ENCODE measurements at regions of chr16 and their contacts with region 1.

Region 1: DNA sequence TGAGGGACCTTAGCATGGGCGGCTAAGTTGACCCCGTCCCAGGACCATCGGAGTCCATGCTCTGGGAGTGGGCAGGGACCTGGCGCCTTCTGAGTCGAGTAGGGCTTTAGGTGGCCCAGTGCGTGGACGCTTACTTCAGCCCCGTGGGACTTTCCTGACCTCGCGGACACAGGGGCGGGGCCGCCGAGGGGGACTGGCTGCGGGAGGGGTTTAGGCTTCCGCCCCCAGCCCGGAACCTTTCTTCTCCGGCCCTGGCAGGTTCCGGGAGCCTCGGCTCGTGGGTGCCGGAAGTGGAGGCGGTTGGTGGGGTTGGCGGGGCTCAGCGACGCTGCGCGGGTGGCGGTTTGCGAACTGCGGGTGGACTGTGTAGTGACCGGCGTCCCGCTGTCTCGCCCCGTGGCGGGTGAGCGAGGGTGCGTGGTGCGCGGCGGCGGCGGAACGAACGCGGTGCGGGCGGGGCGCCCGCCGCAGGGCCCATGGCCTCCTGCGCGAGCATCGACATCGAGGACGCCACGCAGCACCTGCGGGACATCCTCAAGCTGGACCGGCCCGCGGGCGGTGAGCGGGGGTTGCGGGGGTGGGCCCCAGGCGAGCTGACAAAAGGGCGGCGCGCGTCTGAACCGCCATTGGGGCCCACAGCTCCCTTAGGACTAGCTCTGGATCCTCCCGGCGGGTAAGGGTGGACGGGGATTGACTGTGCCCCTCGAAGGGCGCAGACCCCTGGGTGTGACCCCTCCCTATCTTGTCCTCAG is at the start of gene EDC4:
- DNase-seq: peak; percentile 75 to 94 (median 86)
- ATAC-seq: peak; percentile 92
- H3K4me3 ChIP-seq: peak within 1 kb of the TSS; percentile 87 to 97
- H3K4me3 Mint-ChIP-seq: peak within 1 kb of the TSS; percentile 90
- H3K27ac ChIP-seq: peak within 1 kb of the TSS; percentile 78 to 83
- H3K27ac Mint-ChIP-seq: peak within 1 kb of the TSS; percentile 90
- H3K4me1 ChIP-seq: peaks cover 32% of the 10 kb centered on the region
- H3K4me1 Mint-ChIP-seq: peaks cover 32% of the 10 kb centered on the region
- H3K27me3 ChIP-seq: no peaks in the 10 kb centered on the region
- H3K27me3 Mint-ChIP-seq: no peaks in the 10 kb centered on the region
- CTCF ChIP-seq: no peak
- total RNA-seq, gene EDC4: 154 to 169 TPM

Region 2: GRCh38 chr16:67833418-67834241 is 39.3 kb before region 1 on chr16:
- CTCF ChIA-PET with region 1: no interaction called
- POLR2A ChIA-PET with region 1: no interaction called
- intact Hi-C with region 1: loop called (anchors 5 kb)
- DNase-seq: peak; percentile 84 to 96 (median 93)
- ATAC-seq: peak; percentile 99
- H3K4me3 ChIP-seq: peak overlapping the region; percentile 73 to 86
- H3K4me3 Mint-ChIP-seq: peak overlapping the region; percentile 94
- H3K27ac ChIP-seq: peak overlapping the region; percentile 52 to 59
- H3K27ac Mint-ChIP-seq: peak overlapping the region; percentile 77
- H3K4me1 ChIP-seq: peaks cover 17% of the 10 kb centered on the region
- H3K4me1 Mint-ChIP-seq: peaks cover 14% of the 10 kb centered on the region
- H3K27me3 ChIP-seq: no peaks in the 10 kb centered on the region
- H3K27me3 Mint-ChIP-seq: no peaks in the 10 kb centered on the region
- CTCF ChIP-seq: no peak

Region 3: DNA sequence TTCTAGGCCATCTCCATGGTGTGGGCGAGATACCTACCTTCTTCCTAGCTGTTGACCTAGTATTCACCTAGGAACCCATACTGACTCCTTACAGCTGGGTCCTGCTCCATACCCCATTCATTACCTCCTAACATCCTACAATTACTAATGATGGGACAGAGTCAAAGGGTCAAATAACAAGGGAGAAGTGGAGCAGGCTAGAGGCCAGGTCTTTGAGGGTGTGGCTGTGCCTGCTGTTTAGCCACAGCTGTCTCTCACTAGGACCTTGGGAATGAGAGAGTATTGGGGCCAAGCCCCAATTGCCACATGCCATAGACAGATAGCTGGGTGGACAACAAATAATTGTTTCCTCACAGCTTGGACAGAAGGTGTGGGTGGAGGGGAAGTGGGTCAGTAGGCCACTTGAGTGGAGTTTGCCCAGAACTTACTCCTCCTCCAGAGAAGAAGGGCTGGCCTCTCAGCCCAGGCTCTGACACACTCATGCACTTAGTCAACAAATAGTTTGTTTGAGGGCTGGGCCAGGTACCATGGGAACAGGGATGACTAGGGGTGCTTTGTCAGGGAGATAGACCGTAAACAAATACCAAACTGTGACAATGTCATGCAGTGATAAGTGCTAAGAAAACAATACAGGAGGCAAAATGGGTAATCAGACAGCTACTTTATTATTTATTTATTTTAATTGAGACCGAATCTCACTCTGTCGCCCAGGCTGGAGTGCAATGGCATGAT is 15.3 kb before region 1 on chr16:
- CTCF ChIA-PET with region 1: no interaction called
- POLR2A ChIA-PET with region 1: no interaction called
- intact Hi-C with region 1: no loop called
- DNase-seq: peak in 4 of 9 experiments; percentile 35 to 52 (median 44)
- ATAC-seq: peak; percentile 73
- H3K4me3 ChIP-seq: no peak overlapping the region
- H3K4me3 Mint-ChIP-seq: no peak overlapping the region
- H3K27ac ChIP-seq: peak overlapping the region in 1 of 2 experiments; percentile 28
- H3K27ac Mint-ChIP-seq: peak overlapping the region; percentile 77
- H3K4me1 ChIP-seq: no peaks in the 10 kb centered on the region
- H3K4me1 Mint-ChIP-seq: peaks cover 38% of the 10 kb centered on the region
- H3K27me3 ChIP-seq: no peaks in the 10 kb centered on the region
- H3K27me3 Mint-ChIP-seq: no peaks in the 10 kb centered on the region
- CTCF ChIP-seq: no peak

Region 4: GRCh38 chr16:67968400-67969253 is 95.7 kb after region 1 on chr16 and contains the start of gene SLC12A4:
- CTCF ChIA-PET with region 1: no interaction called
- POLR2A ChIA-PET with region 1: no interaction called
- intact Hi-C with region 1: loop called in 1 of 2 experiments (anchors 1 kb)
- DNase-seq: peak; percentile 66 to 93 (median 86)
- ATAC-seq: peak; percentile 90
- H3K4me3 ChIP-seq: peak within 1 kb of the TSS; percentile 78 to 97
- H3K4me3 Mint-ChIP-seq: peak within 1 kb of the TSS; percentile 83
- H3K27ac ChIP-seq: peak within 1 kb of the TSS; percentile 44 to 59
- H3K27ac Mint-ChIP-seq: peak within 1 kb of the TSS; percentile 94
- H3K4me1 ChIP-seq: peaks cover 15% of the 10 kb centered on the region
- H3K4me1 Mint-ChIP-seq: peaks cover 21% of the 10 kb centered on the region
- H3K27me3 ChIP-seq: no peaks in the 10 kb centered on the region
- H3K27me3 Mint-ChIP-seq: no peaks in the 10 kb centered on the region
- CTCF ChIP-seq: no peak
- total RNA-seq, gene SLC12A4: 20.1 to 20.7 TPM

Measured in CD8-positive, alpha-beta T cell (primary cell).